Right ventricle myocardium inferior (tissue), 1 donor: ENCODE measurements at regions of chr9 and their contacts with region 1.

Region 1: GRCh38 chr9:76562511-76562911 is 103.5 kb downstream of the GCNT1 start:
- DNase-seq: no peak
- ATAC-seq: peak; percentile 34

Region 2: DNA sequence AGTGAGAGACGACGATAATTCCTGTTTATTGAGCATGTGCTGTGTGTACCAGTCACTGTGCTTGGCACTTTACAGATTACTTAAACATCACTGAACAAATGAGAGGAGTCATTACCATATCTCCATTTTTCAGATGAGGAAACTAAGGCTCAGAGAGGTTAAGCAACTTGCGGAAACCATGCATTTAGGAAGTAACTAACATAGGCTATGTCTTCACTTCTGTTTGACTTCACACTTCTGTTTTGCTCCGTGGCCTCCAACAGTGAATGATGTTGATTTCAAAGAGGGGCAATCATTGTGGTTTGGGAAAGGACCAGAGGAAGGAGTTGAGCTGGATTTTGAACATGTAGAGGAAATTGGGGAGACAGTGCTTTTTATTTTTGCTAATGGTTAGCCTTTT is 86.8 kb before region 1 on chr9:
- intact Hi-C with region 1: no loop called
- DNase-seq: no peak
- ATAC-seq: no peak

Region 3: DNA sequence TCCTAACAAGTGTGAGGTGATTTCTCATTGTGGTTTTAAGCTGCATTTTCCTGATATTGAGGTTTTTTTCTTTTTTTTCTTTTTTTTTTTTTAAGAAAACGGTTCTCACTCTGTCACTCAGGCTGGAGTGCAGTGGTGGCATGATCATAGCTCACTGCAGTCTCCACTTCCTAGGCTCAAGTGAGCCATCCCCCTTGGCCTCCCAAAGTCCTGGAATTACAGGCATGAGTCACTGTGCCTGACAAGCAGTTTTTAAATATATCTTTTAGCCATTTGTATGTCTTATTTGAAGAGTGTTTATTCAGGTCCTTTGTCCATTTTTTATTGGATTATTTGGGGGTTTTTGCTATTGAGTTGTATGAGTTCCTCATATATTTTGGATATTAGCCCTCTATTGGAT is 49.7 kb before region 1 on chr9:
- intact Hi-C with region 1: no loop called
- DNase-seq: no peak
- ATAC-seq: no peak

Region 4: GRCh38 chr9:76643399-76644117 is 81.0 kb after region 1 on chr9:
- intact Hi-C with region 1: loop called (anchors 10 kb)
- DNase-seq: no peak
- ATAC-seq: peak; percentile 70

Region 5: GRCh38 chr9:76658535-76659231 is 96.2 kb after region 1 on chr9:
- intact Hi-C with region 1: no loop called
- DNase-seq: no peak
- ATAC-seq: peak; percentile 63

Region 6: DNA sequence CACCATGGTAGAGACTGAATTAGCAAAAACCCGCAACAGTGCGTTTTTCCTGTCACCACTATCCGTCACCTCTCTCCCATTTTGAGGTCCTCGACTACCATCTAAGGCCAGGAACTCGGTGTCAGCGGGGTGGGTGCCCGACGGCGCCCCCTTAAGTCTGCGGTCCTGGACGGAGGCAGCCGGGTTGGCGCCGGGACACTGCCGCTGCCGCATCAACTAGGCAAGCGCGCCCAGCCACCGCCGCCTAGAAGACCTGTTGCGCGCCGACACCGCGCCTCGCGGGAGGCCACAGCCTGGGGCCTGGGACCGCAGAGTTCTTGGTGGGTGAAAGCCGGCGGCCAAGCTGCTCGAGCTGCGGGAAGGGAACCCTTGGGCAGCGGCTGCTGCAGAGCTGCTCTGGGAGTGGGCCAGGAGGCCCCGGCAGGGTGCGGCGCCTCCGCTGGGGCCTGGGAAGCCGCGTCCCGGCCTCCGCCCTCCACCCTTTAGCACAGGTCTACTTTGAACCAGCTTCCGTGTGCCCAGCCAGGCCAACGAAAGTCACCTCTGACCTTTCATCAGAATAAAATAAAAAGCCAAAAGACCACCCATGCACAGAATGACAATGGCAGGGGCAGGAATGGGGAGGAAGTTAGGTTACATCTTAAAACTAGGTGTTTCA is 460.4 kb after region 1 on chr9:
- intact Hi-C with region 1: no loop called
- DNase-seq: no peak
- ATAC-seq: no peak